Activated naive CD4-positive, alpha-beta T cell treated with anti-CD3 and anti-CD28 coated beads for 36 hours (primary cell): ENCODE measurements at regions of chr6 and their contacts with region 1.

Region 1: DNA sequence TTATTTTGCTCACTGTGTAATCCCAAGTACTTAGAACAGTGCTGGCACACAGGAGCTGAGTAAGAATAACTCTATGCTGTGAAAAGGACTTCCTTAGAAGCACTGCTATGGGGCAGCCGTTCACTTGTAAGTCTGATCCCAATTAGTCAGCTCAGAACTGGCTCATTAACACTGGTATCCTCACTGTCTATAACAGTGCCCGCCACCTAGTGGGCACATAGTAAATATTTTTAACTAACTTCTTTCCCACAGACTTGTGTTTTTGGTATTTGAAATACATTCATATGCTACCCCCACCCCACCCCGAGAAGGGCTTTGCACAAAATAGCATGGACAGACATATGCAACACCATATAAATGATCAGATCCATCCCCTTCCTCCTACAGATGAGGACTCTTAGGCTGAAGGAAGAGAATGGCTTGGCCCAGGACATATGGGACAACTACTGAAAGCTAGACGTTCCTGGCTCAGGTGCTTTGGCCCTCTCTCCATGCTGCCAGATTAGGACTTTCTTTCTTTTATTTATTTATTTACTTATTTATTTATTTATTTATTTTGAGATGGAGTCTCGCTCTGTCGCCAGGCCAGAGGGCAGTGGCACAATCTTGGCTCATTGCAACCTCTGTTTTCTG is 47.1 kb downstream of the DST start:
- DNase-seq: peak; percentile 74
- H3K4me3 Mint-ChIP-seq: no peak overlapping the region
- H3K27ac Mint-ChIP-seq: peak overlapping the region; percentile 38
- H3K4me1 Mint-ChIP-seq: peaks cover 33% of the 10 kb centered on the region
- H3K27me3 Mint-ChIP-seq: peaks cover 8% of the 10 kb centered on the region

Region 2: DNA sequence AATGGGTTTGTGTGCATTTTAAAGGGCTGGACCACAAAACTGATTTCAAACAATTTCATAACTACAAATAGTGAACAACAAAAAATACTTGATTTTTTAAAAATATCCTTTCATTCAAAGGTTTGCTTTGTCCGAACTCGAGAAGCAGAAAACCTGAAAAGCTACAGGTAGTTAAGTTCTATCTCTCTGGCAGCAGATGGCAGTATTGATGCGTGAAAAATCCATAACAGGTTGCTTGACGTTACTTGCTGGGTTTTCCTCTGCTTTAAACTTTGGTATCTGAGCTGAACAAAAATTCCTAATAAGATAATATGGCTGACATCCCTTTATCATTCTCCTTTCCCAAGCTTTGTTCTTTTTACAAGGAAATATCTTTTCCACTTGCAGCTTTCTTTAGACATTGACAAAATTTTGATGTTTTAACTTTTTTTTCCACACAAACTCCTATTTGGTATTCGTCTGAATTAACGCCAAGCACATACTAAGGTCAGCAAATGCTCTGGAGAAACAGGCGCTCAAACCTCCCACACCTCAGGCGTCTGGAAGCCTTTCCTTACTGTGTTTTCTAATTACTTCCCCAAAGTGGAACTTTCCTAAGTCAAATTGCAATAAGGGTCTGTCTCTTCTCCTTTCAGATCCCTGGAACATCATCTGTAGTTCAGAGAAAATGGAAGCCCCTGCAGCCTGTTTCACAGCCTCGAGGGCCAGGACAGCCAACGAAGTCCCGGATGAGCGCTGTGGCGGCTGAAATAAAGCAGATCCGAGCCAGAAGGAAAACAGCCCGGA is 1318.7 kb before region 1 on chr6:
- CTCF ChIA-PET with region 1: no interaction called
- intact Hi-C with region 1: loop called (anchors 5 kb)
- DNase-seq: peak; percentile 18
- H3K4me3 Mint-ChIP-seq: no peak overlapping the region
- H3K27ac Mint-ChIP-seq: no peak overlapping the region
- H3K4me1 Mint-ChIP-seq: no peaks in the 10 kb centered on the region
- H3K27me3 Mint-ChIP-seq: no peaks in the 10 kb centered on the region

Region 3: DNA sequence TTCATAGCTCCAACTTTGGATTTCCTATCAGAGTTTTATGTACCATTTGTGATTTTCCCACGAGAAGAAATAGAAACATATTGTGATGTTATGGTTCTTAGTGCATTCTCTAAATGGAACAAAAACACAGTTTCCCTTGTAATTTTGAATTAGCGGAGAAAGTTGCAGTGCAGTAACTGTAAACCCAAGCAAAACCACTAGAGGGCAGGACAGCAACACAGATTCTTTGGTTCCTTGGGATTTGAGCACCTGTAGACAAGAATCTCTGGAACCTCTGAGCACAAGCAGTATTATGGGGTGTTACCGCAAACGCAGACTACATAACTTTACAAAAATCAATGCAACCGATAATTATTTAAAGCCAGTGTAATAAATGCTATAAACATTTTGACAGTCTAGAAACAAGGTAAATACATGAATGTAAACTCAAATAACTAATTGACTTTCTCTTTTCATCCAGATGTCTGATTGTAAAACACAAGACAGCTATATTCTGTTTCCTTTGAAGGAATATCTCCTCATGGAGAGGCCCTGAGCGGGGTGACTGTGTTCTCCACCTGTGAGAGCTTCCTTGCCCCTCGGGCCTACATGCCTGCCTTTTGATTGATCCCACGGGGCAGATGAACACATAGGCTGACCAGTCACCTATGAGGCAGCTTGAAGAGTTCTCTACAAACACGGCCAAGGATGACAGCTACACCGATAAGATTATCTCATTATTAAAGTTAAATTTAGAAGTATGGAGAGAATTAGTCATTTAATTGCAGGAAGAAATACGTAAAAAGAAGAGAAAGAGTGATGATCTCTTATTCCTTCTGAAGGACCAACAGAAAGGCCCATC is 280.7 kb before region 1 on chr6:
- CTCF ChIA-PET with region 1: interaction called, 3 read pairs
- intact Hi-C with region 1: loop called (anchors 1 kb)
- DNase-seq: peak; percentile 21
- H3K4me3 Mint-ChIP-seq: no peak overlapping the region
- H3K27ac Mint-ChIP-seq: no peak overlapping the region
- H3K4me1 Mint-ChIP-seq: no peaks in the 10 kb centered on the region
- H3K27me3 Mint-ChIP-seq: no peaks in the 10 kb centered on the region

Region 4: DNA sequence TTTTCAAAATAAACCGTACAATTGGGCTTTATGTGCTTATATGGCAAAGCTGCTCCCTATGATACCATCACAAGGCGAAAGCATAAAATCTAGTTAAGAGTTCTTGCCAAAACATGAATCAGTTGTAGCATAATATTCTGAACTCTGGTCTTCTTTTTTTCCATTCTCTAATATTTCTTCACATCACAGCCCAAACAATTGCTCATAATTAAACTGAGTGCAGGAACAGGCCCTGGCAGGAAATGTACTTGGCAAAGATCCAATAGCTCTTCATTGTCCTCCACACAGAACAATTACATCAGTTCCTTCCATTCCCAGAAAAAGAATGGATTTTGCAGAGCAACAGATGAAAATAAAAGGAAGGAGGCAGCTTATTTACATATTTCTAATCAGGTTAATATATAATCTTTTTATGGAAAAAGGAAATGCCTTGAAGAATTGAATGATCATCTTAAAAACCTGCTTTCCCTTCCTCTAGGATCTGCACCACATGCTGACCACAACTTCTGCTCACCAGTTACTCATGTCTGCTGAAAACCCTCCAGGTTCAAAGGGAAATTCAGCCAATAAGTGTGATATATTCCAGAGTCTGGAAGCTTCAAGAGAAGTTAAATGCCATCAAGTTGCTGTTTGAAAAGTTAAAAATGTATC is 224.9 kb before region 1 on chr6:
- CTCF ChIA-PET with region 1: interaction called, 35 read pairs
- intact Hi-C with region 1: no loop called
- DNase-seq: no peak
- H3K4me3 Mint-ChIP-seq: no peak overlapping the region
- H3K27ac Mint-ChIP-seq: no peak overlapping the region
- H3K4me1 Mint-ChIP-seq: peaks cover 9% of the 10 kb centered on the region
- H3K27me3 Mint-ChIP-seq: peaks cover 4% of the 10 kb centered on the region

Region 5: GRCh38 chr6:56570413-56571359 is 24.9 kb before region 1 on chr6:
- CTCF ChIA-PET with region 1: interaction called, 30 read pairs
- intact Hi-C with region 1: loop called (anchors 1 kb)
- DNase-seq: no peak
- H3K4me3 Mint-ChIP-seq: no peak overlapping the region
- H3K27ac Mint-ChIP-seq: no peak overlapping the region
- H3K4me1 Mint-ChIP-seq: no peaks in the 10 kb centered on the region
- H3K27me3 Mint-ChIP-seq: no peaks in the 10 kb centered on the region

Region 6: DNA sequence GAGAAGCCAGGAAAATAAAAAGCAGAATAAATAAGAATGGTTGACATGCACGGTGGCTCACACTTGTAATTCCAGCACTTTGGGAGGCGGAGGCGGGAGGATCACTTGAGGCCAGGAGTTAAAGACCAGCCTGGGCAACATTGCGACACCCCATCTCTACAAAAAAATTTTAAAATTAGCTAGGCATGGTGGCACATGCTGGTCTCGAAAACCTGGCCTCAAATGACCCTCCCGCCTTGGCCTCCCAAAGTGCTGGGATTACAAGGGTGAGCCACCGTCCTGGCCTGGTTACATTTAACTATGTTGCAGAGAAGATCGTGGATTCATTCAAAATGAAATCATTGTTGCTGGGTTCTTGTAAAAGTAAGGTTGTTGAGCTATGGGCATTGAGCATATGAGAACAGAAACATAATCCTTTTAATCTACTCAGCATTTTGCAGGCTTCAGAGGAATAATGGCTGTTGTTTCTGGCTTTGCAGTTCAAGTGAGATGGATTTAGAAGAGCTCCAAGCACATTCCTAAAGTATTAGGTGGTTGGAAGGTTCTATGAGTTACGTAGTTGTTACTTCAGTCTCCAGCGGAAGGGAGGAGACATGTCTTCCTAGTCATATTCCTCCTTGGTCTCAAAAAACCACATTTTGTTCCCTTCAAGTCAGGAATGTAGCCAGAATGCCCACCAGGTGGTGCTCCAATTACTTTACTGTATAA is 672.1 kb after region 1 on chr6:
- CTCF ChIA-PET with region 1: no interaction called
- intact Hi-C with region 1: loop called (anchors 1 kb)
- DNase-seq: peak; percentile 68
- H3K4me3 Mint-ChIP-seq: no peak overlapping the region
- H3K27ac Mint-ChIP-seq: no peak overlapping the region
- H3K4me1 Mint-ChIP-seq: peaks cover 20% of the 10 kb centered on the region
- H3K27me3 Mint-ChIP-seq: peaks cover 10% of the 10 kb centered on the region